Activated CD8-positive, alpha-beta T cell treated with anti-CD3 and anti-CD28 coated beads, Interleukin-2, amount 10 ng/mL, durations not matched to agents 7 days and 5 days (primary cell): ENCODE measurements at regions of chr7 and their contacts with region 1.

Region 1: DNA sequence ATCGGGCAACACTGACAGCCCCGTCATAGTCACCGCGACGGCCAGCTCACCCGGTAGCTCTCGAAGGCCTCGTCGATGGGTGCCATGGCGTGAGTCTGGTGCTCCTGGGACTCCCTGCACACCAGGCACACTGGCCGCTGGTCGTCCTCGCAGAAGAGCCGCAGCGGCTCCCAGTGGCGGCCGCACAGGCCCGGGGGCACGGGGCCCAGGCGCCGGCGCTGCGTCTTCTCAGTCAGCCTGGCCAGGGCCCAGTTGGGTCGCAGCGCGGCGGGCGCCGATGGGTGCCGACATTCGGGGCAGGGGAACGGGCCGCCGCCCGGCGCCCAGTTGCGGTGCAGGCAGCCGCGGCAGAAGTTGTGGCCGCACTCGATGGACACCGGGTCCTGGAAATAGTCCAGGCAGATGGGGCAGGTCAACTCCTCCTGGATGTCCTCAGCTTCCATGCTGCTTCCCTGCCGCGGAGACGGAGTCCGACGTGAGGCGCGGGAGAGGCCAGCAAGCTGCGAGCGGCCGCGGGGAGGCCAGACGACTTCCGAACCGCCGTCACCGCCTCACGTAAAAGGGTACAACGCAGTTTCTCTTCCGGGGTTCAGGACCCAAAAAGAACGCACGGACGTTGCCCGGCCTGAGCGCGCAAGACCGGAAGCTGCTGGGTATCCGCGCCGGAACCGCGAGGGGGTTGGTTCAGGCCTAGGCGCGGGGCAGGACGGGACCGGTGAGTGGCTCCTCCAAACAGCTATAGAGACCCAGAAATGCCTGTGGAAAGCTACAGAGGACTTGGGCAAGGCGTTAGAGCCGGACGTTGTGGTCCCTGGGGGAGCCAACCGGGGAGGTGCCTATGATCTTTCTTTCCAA is at the start of gene TRIM4:
- DNase-seq: peak; percentile 93
- ATAC-seq: peak; percentile 98
- H3K4me3 Mint-ChIP-seq: peak within 1 kb of the TSS; percentile 97
- H3K27ac Mint-ChIP-seq: peak within 1 kb of the TSS; percentile 98
- H3K4me1 Mint-ChIP-seq: peaks cover 40% of the 10 kb centered on the region
- H3K27me3 Mint-ChIP-seq: no peaks in the 10 kb centered on the region
- total RNA-seq, gene TRIM4: 26.7 to 28.0 TPM

Region 2: DNA sequence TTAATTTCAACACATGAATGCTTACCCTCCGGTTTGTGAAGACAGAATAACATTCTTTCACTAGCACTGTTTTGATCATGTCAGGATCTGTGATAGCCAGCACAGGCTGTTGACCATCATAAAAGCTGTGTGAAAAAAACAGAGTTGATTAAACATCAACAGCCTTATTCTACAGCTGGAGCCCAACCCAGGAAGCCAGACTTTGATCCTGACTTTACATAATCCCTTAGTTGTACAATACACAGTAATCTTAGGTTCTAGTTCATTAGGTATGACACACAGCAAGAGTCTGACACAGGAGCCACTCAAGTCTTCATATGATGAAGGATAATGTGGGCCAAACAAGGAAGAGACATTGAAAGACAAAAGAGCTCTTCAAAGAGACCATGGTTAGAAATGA is 146.6 kb before region 1 on chr7:
- CTCF ChIA-PET with region 1: no interaction called
- POLR2A ChIA-PET with region 1: no interaction called
- DNase-seq: no peak
- ATAC-seq: no peak
- H3K4me3 Mint-ChIP-seq: no peak overlapping the region
- H3K27ac Mint-ChIP-seq: no peak overlapping the region
- H3K4me1 Mint-ChIP-seq: peaks cover 13% of the 10 kb centered on the region
- H3K27me3 Mint-ChIP-seq: peaks cover 52% of the 10 kb centered on the region

Region 3: GRCh38 chr7:99898831-99899230 is 20.4 kb before region 1 on chr7:
- CTCF ChIA-PET with region 1: interaction called, 10 read pairs
- POLR2A ChIA-PET with region 1: no interaction called
- DNase-seq: no peak
- ATAC-seq: no peak
- H3K4me3 Mint-ChIP-seq: no peak overlapping the region
- H3K27ac Mint-ChIP-seq: no peak overlapping the region
- H3K4me1 Mint-ChIP-seq: peaks cover 15% of the 10 kb centered on the region
- H3K27me3 Mint-ChIP-seq: no peaks in the 10 kb centered on the region

Region 4: DNA sequence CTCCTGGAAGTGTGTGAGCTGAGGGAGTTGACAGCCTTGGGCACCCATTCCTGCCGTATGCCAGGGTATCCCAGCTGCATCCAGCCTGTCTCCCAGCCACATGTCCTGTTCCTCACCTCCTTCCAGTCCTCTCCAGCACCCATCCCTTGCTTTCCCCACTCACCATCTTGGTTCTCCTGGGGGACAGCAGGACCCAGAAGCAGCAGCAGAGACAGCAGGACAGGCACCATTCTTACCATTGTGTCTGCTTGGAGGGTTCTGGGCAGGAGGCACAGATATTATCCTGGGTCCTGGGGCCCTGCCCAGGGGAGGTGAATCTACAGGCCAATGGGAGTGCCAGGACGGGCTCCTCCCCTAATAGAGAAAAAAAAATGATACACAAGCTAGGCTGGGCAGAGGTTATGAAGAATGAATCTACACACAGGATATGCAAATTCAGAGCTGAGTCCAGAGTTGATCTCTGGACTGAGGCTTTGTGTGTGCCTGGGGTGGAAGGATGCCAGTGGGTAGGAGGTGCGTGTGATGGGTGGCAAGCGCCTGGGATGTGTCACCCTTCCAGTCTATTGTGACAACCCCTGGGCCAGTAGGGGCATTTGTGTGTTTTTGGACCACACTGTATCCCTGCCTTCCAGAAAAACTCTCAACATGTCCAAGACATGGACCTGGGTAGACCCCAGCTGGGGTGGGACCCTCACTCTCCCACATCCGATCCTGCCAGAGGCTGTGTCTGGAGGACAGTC is 56.8 kb after region 1 on chr7 and contains the start of gene AZGP1:
- CTCF ChIA-PET with region 1: interaction called, 73 read pairs
- POLR2A ChIA-PET with region 1: interaction called, 4 read pairs
- DNase-seq: no peak
- ATAC-seq: no peak
- H3K4me3 Mint-ChIP-seq: no peak within 1 kb of the TSS
- H3K27ac Mint-ChIP-seq: no peak within 1 kb of the TSS
- H3K4me1 Mint-ChIP-seq: peaks cover 18% of the 10 kb centered on the region
- H3K27me3 Mint-ChIP-seq: peaks cover 3% of the 10 kb centered on the region
- total RNA-seq, gene AZGP1: not detected

Region 5: DNA sequence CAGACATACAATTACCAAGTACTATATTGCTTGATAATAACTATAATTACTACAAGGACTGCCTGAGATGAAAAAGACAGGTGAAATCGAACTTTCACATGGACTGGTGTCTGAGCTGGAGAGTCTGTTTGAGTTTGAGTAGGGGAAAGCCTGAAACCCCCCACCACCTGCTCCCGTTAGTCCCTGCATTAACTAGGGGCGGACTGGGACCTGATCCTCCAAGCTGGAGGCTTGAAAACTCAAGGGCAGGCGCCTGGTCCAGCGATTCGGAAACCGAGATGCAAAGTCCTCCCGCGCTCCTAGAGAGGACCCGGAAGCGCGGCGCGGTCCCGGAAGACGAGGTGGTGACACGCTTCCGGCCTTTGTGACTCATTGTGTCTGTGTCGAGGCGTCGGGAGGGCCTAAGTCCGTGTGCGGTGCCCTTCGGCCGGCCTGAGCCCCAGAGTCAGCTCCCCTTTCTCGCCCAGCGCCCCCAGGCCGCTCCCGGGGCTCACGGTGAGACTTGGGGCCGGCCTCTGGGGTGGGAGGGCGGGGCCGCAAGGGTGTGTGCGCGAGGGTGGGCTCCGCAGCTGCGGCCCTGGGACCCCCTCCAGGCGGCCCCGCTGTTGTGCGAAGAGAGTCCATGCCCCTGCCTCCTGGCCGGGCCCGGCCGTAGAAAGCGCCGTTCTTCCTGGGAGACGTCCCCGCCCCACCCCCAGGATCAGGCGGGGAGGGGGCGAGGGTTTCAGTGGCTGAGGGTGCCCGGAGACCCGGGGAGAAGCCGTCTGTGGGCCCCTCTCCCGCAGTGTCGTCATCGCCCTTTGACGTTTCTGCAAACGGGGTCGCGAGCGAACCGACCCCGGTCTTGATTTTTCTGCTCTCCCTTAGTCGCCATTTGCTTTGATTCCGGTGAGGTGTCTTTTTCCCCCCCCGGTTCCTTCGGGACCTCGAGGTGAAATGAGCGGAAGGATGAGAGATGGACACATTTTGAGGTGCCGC is 96.3 kb after region 1 on chr7 and contains the start of gene ZKSCAN1:
- CTCF ChIA-PET with region 1: interaction called, 9 read pairs
- POLR2A ChIA-PET with region 1: interaction called, 11 read pairs
- DNase-seq: peak; percentile 90
- ATAC-seq: peak; percentile 98
- H3K4me3 Mint-ChIP-seq: peak within 1 kb of the TSS; percentile 92
- H3K27ac Mint-ChIP-seq: peak within 1 kb of the TSS; percentile 95
- H3K4me1 Mint-ChIP-seq: peaks cover 50% of the 10 kb centered on the region
- H3K27me3 Mint-ChIP-seq: no peaks in the 10 kb centered on the region
- total RNA-seq, gene ZKSCAN1: 50.4 to 54.5 TPM

Region 6: GRCh38 chr7:100081535-100082102 is 162.4 kb after region 1 on chr7 and contains the start of gene ZNF3:
- CTCF ChIA-PET with region 1: interaction called, 10 read pairs
- POLR2A ChIA-PET with region 1: interaction called, 5 read pairs
- DNase-seq: peak; percentile 99
- ATAC-seq: peak; percentile 91
- H3K4me3 Mint-ChIP-seq: peak within 1 kb of the TSS; percentile 83
- H3K27ac Mint-ChIP-seq: peak within 1 kb of the TSS; percentile 90
- H3K4me1 Mint-ChIP-seq: peaks cover 25% of the 10 kb centered on the region
- H3K27me3 Mint-ChIP-seq: peaks cover 3% of the 10 kb centered on the region
- total RNA-seq, gene ZNF3: 20.9 to 21.8 TPM